ENCODE measurements at regions of chr4 and their contacts with region 1.

Region 1: GRCh38 chr4:139453371-139454110 is 380 bp upstream of the RAB33B start:
- DNase-seq: peak; percentile 97
- H3K4me3 ChIP-seq: peak overlapping the region; percentile 82
- H3K27ac ChIP-seq: peak overlapping the region; percentile 88
- H3K4me1 ChIP-seq: peaks cover 43% of the 10 kb centered on the region
- CTCF ChIP-seq: peak; percentile 48; the same call in 1 of the 2 replicates

Region 2: GRCh38 chr4:138242076-138242833 is 1211.3 kb before region 1 on chr4 and contains the start of gene SLC7A11:
- CTCF ChIA-PET with region 1: no interaction called
- POLR2A ChIA-PET with region 1: no interaction called
- intact Hi-C with region 1: loop called (anchors 10 kb)
- DNase-seq: peak; percentile 97
- H3K4me3 ChIP-seq: peak within 1 kb of the TSS; percentile 76
- H3K27ac ChIP-seq: peak within 1 kb of the TSS; percentile 91
- H3K4me1 ChIP-seq: peaks cover 30% of the 10 kb centered on the region
- CTCF ChIP-seq: no peak
- total RNA-seq, gene SLC7A11: 5.2 and 5.7 TPM in 2 replicates

Region 3: DNA sequence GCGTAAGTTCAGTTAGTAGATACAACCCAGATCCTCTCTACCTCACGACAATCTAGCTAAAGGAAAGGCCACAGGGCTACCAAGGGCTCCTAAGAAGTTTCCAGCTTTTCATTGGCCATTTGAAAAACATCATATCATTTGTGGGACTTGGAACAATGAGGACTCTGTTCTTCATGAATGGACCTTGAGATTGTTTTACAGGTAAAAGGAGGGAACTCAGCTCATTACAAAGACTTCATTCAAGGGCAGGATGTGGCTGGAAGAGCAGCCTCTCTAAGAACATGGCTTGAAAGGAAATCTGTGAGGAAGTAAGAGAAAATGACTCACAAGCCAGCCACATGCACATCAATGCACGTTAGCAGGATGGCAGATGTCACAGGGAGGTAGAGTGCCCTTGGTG is 1105.5 kb before region 1 on chr4:
- CTCF ChIA-PET with region 1: no interaction called
- POLR2A ChIA-PET with region 1: no interaction called
- intact Hi-C with region 1: no loop called
- DNase-seq: peak; percentile 2
- H3K4me3 ChIP-seq: no peak overlapping the region
- H3K27ac ChIP-seq: no peak overlapping the region
- H3K4me1 ChIP-seq: no peaks in the 10 kb centered on the region
- CTCF ChIP-seq: no peak

Region 4: GRCh38 chr4:139083956-139084803 is 369.4 kb before region 1 on chr4:
- CTCF ChIA-PET with region 1: no interaction called
- POLR2A ChIA-PET with region 1: interaction called, 9 read pairs
- intact Hi-C with region 1: loop called (anchors 5 kb)
- DNase-seq: peak; percentile 93
- H3K4me3 ChIP-seq: peak overlapping the region; percentile 91
- H3K27ac ChIP-seq: peak overlapping the region; percentile 95
- H3K4me1 ChIP-seq: peaks cover 22% of the 10 kb centered on the region
- CTCF ChIP-seq: peak; percentile 46

Region 5: GRCh38 chr4:139301113-139301820 is 152.3 kb before region 1 on chr4 and contains the start of gene NAA15:
- CTCF ChIA-PET with region 1: no interaction called
- POLR2A ChIA-PET with region 1: interaction called, 5 read pairs
- intact Hi-C with region 1: loop called (anchors 1 kb)
- DNase-seq: peak; percentile 99
- H3K4me3 ChIP-seq: peak within 1 kb of the TSS; percentile 84
- H3K27ac ChIP-seq: peak within 1 kb of the TSS; percentile 89
- H3K4me1 ChIP-seq: peaks cover 38% of the 10 kb centered on the region
- CTCF ChIP-seq: no peak
- total RNA-seq, gene NAA15: 45.3 and 50.1 TPM in 2 replicates

Region 6: GRCh38 chr4:139416073-139416673 is 37.4 kb before region 1 on chr4:
- CTCF ChIA-PET with region 1: no interaction called
- POLR2A ChIA-PET with region 1: no interaction called
- intact Hi-C with region 1: loop called (anchors 2 kb)
- DNase-seq: peak; percentile 67
- H3K4me3 ChIP-seq: no peak overlapping the region
- H3K27ac ChIP-seq: no peak overlapping the region
- H3K4me1 ChIP-seq: peaks cover 5% of the 10 kb centered on the region
- CTCF ChIP-seq: peak; percentile 95

Measured in OCI-LY7 (cell line).